ENCODE measurements at regions of chr19 and their contacts with region 1.

Region 1: DNA sequence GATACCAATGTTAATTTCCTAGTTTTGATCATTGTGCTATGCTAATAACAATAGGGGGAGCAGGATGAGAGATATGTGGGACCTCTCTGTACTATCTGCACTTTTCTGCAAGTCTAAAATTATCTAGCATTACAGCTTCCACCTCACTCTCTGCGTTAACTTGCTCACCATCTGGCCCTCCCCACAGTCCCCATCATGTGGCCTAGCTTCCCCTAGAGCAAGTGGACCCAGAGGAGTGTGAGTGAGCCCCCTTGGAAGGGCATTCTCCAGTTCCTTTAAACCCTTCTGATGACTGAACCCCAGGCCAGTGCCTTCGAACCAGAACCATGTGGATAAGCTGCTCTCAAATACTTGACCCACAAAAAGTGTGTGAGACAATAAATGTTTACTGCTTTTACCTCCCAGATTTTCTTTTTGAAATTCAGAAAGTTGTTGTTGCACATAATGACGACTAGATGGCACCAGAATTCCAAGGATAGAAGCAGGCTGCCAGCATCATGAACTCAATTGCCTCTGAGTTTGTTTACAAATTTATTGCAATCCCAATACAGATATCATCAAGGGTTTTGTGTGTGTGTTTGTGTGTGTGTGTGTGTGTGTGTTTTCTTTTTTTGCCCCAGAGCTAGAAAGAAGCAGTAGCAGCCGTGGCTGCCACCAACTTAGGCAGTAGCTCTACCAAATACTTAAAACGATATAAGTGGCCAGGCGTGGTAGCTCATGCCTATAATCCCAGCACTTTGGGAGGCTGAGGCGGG is 49.0 kb upstream of the ZNF780A start:
- DNase-seq: peak; percentile 100
- ATAC-seq: peak; percentile 76
- H3K4me3 ChIP-seq: no peak overlapping the region
- H3K27ac ChIP-seq: no peak overlapping the region
- H3K4me1 ChIP-seq: no peaks in the 10 kb centered on the region
- H3K27me3 ChIP-seq: peaks cover 43% of the 10 kb centered on the region
- CTCF ChIP-seq: no peak

Region 2: GRCh38 chr19:39052243-39052746 is 1087.4 kb before region 1 on chr19:
- CTCF ChIA-PET with region 1: interaction called, 6 read pairs
- POLR2A ChIA-PET with region 1: no interaction called
- in situ Hi-C with region 1: no loop called
- intact Hi-C with region 1: loop called (anchors 10 kb)
- DNase-seq: peak; percentile 90
- ATAC-seq: peak; percentile 91
- H3K4me3 ChIP-seq: no peak overlapping the region
- H3K27ac ChIP-seq: peak overlapping the region; percentile 4; the same call in 1 of the 2 replicates
- H3K4me1 ChIP-seq: no peaks in the 10 kb centered on the region
- H3K27me3 ChIP-seq: no peaks in the 10 kb centered on the region
- CTCF ChIP-seq: no peak

Region 3: DNA sequence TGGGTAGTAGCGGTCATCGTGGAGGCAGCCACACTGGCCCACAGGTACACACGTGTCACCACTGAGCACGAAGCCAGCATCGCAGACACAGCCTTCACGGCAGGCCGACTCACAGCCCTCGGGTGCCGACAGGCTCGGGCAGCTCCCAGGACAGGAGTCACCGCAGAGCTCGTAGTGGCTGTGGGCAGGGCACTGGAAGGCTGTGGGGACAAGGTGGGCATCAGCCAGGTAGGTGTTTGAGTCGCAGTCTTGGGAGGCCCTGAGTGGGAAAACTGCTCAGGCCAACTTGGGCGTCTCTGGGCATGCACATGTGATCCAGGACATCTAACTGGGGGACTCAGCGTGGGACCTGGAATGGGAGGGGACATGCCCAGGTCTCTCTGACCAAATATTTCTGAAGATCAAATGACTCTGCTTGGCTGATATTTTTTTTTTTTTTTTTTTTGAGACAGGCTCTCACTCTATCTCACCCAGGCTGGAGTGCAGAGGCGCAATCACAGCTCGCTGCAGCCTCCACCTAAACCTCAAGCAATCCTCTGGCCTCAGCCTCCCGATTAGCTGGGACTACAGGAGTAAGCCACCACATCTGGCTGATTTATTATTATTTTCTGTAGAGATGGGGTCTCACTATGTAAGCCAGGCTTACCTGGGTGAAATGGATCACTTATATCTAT is 249.7 kb before region 1 on chr19:
- CTCF ChIA-PET with region 1: no interaction called
- POLR2A ChIA-PET with region 1: no interaction called
- in situ Hi-C with region 1: no loop called
- intact Hi-C with region 1: loop called (anchors 10 kb)
- DNase-seq: no peak
- ATAC-seq: peak; percentile 0; the same call in 1 of the 2 replicates
- H3K4me3 ChIP-seq: no peak overlapping the region
- H3K27ac ChIP-seq: no peak overlapping the region
- H3K4me1 ChIP-seq: no peaks in the 10 kb centered on the region
- H3K27me3 ChIP-seq: no peaks in the 10 kb centered on the region
- CTCF ChIP-seq: no peak

Region 4: DNA sequence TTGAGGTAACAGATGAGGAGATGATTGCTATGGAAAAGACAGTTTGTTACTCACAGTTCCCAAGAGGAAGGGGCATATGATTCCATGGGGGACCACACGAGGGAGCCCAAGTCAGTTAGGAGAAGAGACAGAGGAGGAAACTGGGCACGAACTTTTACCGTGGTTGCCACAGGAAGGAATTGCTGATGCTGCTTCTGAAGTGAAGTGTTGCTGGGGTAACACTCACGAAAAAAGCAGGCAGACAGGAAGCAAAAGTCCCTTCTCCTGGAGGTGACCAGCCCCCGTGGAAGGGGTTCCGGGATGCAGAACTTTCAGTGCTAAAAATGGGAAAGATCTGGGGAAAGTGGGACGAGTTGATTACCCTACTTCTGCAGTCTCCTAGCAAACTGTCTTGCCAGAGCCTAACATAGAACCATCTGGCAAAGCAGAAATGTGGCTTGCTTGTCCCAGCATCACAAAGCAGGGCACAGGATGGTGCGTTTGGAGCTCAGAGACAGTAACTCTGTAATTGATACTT is 16.1 kb after region 1 on chr19:
- CTCF ChIA-PET with region 1: interaction called, 90 read pairs
- POLR2A ChIA-PET with region 1: interaction called, 7 read pairs
- in situ Hi-C with region 1: no loop called
- intact Hi-C with region 1: no loop called
- DNase-seq: peak; percentile 99
- ATAC-seq: peak; percentile 90
- H3K4me3 ChIP-seq: peak overlapping the region in 1 of 2 experiments; percentile 5; a peak in 2 of 4 replicates
- H3K27ac ChIP-seq: no peak overlapping the region
- H3K4me1 ChIP-seq: 0 out of 2 replicates have a peak, but pooled peaks cover 2% of the 10 kb centered on the region
- H3K27me3 ChIP-seq: no peaks in the 10 kb centered on the region
- CTCF ChIP-seq: no peak

Region 5: GRCh38 chr19:40231544-40232424 is 92.1 kb after region 1 on chr19:
- CTCF ChIA-PET with region 1: interaction called, 62 read pairs
- POLR2A ChIA-PET with region 1: interaction called, 8 read pairs
- in situ Hi-C with region 1: loop called (anchors 5 kb)
- intact Hi-C with region 1: no loop called
- DNase-seq: no peak
- ATAC-seq: peak; percentile 62
- H3K4me3 ChIP-seq: no peak overlapping the region
- H3K27ac ChIP-seq: peak overlapping the region; percentile 35
- H3K4me1 ChIP-seq: peaks cover 35% of the 10 kb centered on the region
- H3K27me3 ChIP-seq: peaks cover under 1% of the 10 kb centered on the region; the same call in 1 of the 2 replicates
- CTCF ChIP-seq: no peak

Region 6: GRCh38 chr19:40294560-40294959 is 154.8 kb after region 1 on chr19:
- CTCF ChIA-PET with region 1: interaction called, 35 read pairs
- POLR2A ChIA-PET with region 1: interaction called, 10 read pairs
- in situ Hi-C with region 1: no loop called
- intact Hi-C with region 1: no loop called
- DNase-seq: no peak
- ATAC-seq: peak; percentile 4
- H3K4me3 ChIP-seq: no peak overlapping the region
- H3K27ac ChIP-seq: no peak overlapping the region
- H3K4me1 ChIP-seq: no peaks in the 10 kb centered on the region
- H3K27me3 ChIP-seq: peaks cover 4% of the 10 kb centered on the region; the same call in 1 of the 2 replicates
- CTCF ChIP-seq: no peak